MCF 10A (cell line): ENCODE measurements at regions of chr7 and their contacts with region 1.

Region 1: GRCh38 chr7:66050990-66051424 is 24.6 kb upstream of the ASL start:
- DNase-seq: peak; percentile 99
- H3K4me3 Mint-ChIP-seq: no peak overlapping the region
- H3K27ac Mint-ChIP-seq: peak overlapping the region; percentile 51
- H3K4me1 Mint-ChIP-seq: peaks cover 29% of the 10 kb centered on the region
- H3K27me3 Mint-ChIP-seq: no peaks in the 10 kb centered on the region
- CTCF ChIP-seq: no peak

Region 2: GRCh38 chr7:66033471-66034385 is 17.3 kb before region 1 on chr7:
- CTCF ChIA-PET with region 1: interaction called, 15 read pairs
- POLR2A ChIA-PET with region 1: interaction called, 9 read pairs
- intact Hi-C with region 1: no loop called
- DNase-seq: no peak
- H3K4me3 Mint-ChIP-seq: no peak overlapping the region
- H3K27ac Mint-ChIP-seq: no peak overlapping the region
- H3K4me1 Mint-ChIP-seq: no peaks in the 10 kb centered on the region
- H3K27me3 Mint-ChIP-seq: no peaks in the 10 kb centered on the region
- CTCF ChIP-seq: no peak

Region 3: DNA sequence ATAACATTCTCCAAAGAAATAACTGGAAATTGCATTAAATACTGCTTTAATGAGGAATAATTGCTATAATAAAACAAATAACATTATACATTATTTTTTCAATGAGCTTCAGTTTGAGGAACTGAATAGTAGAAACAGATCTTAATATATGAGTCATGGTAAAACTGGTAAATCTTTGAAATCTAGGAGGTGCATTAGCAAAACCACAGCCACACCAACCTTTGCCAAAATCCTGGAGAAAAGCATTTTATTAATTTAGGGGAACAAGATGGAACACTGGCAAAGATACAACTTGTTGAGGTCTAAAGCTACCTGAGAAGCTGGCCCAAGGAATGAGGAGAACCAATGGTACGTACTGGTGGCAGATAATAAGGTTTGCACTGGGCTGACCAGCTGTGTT is 19.2 kb after region 1 on chr7:
- CTCF ChIA-PET with region 1: interaction called, 6 read pairs
- POLR2A ChIA-PET with region 1: interaction called, 10 read pairs
- intact Hi-C with region 1: no loop called
- DNase-seq: no peak
- H3K4me3 Mint-ChIP-seq: no peak overlapping the region
- H3K27ac Mint-ChIP-seq: no peak overlapping the region
- H3K4me1 Mint-ChIP-seq: peaks cover 6% of the 10 kb centered on the region
- H3K27me3 Mint-ChIP-seq: no peaks in the 10 kb centered on the region
- CTCF ChIP-seq: no peak

Region 4: GRCh38 chr7:66075590-66076461 is 24.8 kb after region 1 on chr7 and contains the start of gene ASL:
- CTCF ChIA-PET with region 1: interaction called, 6 read pairs
- POLR2A ChIA-PET with region 1: interaction called, 10 read pairs
- intact Hi-C with region 1: no loop called
- DNase-seq: peak; percentile 93
- H3K4me3 Mint-ChIP-seq: peak within 1 kb of the TSS; percentile 84
- H3K27ac Mint-ChIP-seq: peak within 1 kb of the TSS; percentile 23
- H3K4me1 Mint-ChIP-seq: no peaks in the 10 kb centered on the region
- H3K27me3 Mint-ChIP-seq: no peaks in the 10 kb centered on the region
- CTCF ChIP-seq: no peak
- total RNA-seq, gene ASL: 53.6 and 56.5 TPM in 2 replicates

Region 5: DNA sequence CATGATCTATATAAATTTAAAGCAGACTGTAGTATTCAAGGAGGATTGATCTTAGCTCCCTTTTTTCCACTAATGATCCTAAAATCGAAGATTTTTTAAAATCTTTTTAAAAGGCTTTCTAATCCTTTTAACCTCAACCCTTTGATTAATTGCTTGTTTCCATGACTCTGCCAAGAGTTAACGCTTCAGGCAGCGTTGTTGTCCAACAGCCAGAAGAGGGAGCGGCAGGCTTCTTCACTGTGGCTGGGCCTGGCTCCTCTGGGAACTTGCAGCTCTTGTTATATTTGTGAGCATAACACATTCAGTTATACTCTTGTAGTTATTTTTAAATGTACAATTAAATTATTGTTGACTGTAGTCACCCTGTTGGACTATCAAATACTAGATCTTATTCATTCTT is 89.9 kb after region 1 on chr7:
- CTCF ChIA-PET with region 1: no interaction called
- POLR2A ChIA-PET with region 1: no interaction called
- intact Hi-C with region 1: no loop called
- DNase-seq: peak; percentile 71
- H3K4me3 Mint-ChIP-seq: no peak overlapping the region
- H3K27ac Mint-ChIP-seq: no peak overlapping the region
- H3K4me1 Mint-ChIP-seq: peaks cover 19% of the 10 kb centered on the region
- H3K27me3 Mint-ChIP-seq: no peaks in the 10 kb centered on the region
- CTCF ChIP-seq: peak; percentile 53